ENCODE measurements at regions of chr14 and their contacts with region 1.

Region 1: GRCh38 chr14:67541448-67542387 is 8.6 kb downstream of the PLEKHH1 start:
- DNase-seq: peak in 1 of 2 experiments; percentile 69
- H3K4me3 ChIP-seq: peak overlapping the region; percentile 20 to 50 (median 30); a peak in 5 of 8 replicates
- H3K27ac ChIP-seq: peak overlapping the region; percentile 76
- H3K4me1 ChIP-seq: peaks cover 6 to 20% (median 13%) of the 10 kb centered on the region in 4 experiments
- H3K27me3 ChIP-seq: no peaks in the 10 kb centered on the region
- CTCF ChIP-seq: no peak
- EP300 ChIP-seq: no peak
- POLR2A ChIP-seq: peak; percentile 66 to 75
- RAD21 ChIP-seq: no peak

Region 2: DNA sequence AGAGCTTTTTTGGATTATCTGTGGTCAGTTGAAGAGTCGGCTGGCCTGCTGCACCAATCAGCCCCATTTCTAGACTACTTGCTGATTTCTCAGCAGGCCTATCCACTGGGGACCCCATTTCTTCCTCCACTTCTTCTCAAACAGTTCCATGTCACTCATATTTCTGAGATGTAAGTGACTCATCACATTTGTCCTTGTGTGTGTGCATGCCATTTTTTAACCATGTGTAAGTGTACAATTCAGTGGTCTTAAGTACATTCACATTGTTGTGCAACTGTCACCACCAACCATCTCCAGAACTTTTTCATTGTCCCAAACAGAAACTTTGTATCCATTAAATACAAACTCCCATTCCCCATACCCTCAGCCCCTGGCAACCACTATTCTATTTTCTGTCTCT is 67.4 kb before region 1 on chr14:
- CTCF ChIA-PET with region 1: no interaction called
- POLR2A ChIA-PET with region 1: no interaction called
- DNase-seq: no peak
- H3K4me3 ChIP-seq: no peak overlapping the region
- H3K27ac ChIP-seq: no peak overlapping the region
- H3K4me1 ChIP-seq: no peaks in the 10 kb centered on the region; a peak in 1 of 7 replicates
- H3K27me3 ChIP-seq: no peaks in the 10 kb centered on the region
- CTCF ChIP-seq: no peak
- EP300 ChIP-seq: no peak
- POLR2A ChIP-seq: no peak
- RAD21 ChIP-seq: no peak

Region 3: GRCh38 chr14:67557126-67557525 is 15.4 kb after region 1 on chr14:
- CTCF ChIA-PET with region 1: interaction called, 924 read pairs
- POLR2A ChIA-PET with region 1: interaction called, 16 read pairs
- DNase-seq: no peak
- H3K4me3 ChIP-seq: no peak overlapping the region
- H3K27ac ChIP-seq: no peak overlapping the region
- H3K4me1 ChIP-seq: peaks cover 0 to 3% (median under 1%) of the 10 kb centered on the region in 4 experiments; a peak in 2 of 7 replicates
- H3K27me3 ChIP-seq: no peaks in the 10 kb centered on the region
- CTCF ChIP-seq: no peak
- EP300 ChIP-seq: no peak
- POLR2A ChIP-seq: no peak
- RAD21 ChIP-seq: no peak